Activated T-helper 1 cell treated with anti-CD3 and anti-CD28 coated beads, Interleukin-12 subunit alpha, Interleukin-12 subunit beta, Interleukin-2, Interleukin-4 antibody, amounts not matched to agents 30 ng/mL and 10 ng/mL and 1 ng/mL, durations not matched to agents 14 hours and 24 hours and 36 hours (primary cell): ENCODE measurements at regions of chr12 and their contacts with region 1.

Region 1: GRCh38 chr12:22544038-22544979 is at the start of gene C2CD5:
- DNase-seq: peak; percentile 92
- H3K4me3 Mint-ChIP-seq: peak within 1 kb of the TSS; percentile 94
- H3K27ac Mint-ChIP-seq: peak within 1 kb of the TSS; percentile 96
- H3K4me1 Mint-ChIP-seq: peaks cover 35% of the 10 kb centered on the region
- H3K27me3 Mint-ChIP-seq: peaks cover 14% of the 10 kb centered on the region
- total RNA-seq, gene C2CD5: 30.0 and 35.5 TPM in 2 replicates

Region 2: GRCh38 chr12:21476949-21477348 is 1067.4 kb before region 1 on chr12:
- intact Hi-C with region 1: loop called (anchors 10 kb)
- DNase-seq: no peak
- H3K4me3 Mint-ChIP-seq: no peak overlapping the region
- H3K27ac Mint-ChIP-seq: peak overlapping the region; percentile 83
- H3K4me1 Mint-ChIP-seq: peaks cover 22% of the 10 kb centered on the region
- H3K27me3 Mint-ChIP-seq: no peaks in the 10 kb centered on the region

Region 3: GRCh38 chr12:22046090-22046967 is 498.0 kb before region 1 on chr12 and contains the start of gene CMAS:
- intact Hi-C with region 1: loop called (anchors 2 kb)
- DNase-seq: peak; percentile 70
- H3K4me3 Mint-ChIP-seq: peak within 1 kb of the TSS; percentile 95
- H3K27ac Mint-ChIP-seq: peak within 1 kb of the TSS; percentile 88
- H3K4me1 Mint-ChIP-seq: peaks cover 48% of the 10 kb centered on the region
- H3K27me3 Mint-ChIP-seq: no peaks in the 10 kb centered on the region
- total RNA-seq, gene CMAS: 34.1 and 34.9 TPM in 2 replicates

Region 4: GRCh38 chr12:22529281-22530060 is 14.8 kb before region 1 on chr12:
- intact Hi-C with region 1: loop called (anchors 1 kb)
- DNase-seq: no peak
- H3K4me3 Mint-ChIP-seq: no peak overlapping the region
- H3K27ac Mint-ChIP-seq: no peak overlapping the region
- H3K4me1 Mint-ChIP-seq: peaks cover 14% of the 10 kb centered on the region
- H3K27me3 Mint-ChIP-seq: no peaks in the 10 kb centered on the region

Region 5: DNA sequence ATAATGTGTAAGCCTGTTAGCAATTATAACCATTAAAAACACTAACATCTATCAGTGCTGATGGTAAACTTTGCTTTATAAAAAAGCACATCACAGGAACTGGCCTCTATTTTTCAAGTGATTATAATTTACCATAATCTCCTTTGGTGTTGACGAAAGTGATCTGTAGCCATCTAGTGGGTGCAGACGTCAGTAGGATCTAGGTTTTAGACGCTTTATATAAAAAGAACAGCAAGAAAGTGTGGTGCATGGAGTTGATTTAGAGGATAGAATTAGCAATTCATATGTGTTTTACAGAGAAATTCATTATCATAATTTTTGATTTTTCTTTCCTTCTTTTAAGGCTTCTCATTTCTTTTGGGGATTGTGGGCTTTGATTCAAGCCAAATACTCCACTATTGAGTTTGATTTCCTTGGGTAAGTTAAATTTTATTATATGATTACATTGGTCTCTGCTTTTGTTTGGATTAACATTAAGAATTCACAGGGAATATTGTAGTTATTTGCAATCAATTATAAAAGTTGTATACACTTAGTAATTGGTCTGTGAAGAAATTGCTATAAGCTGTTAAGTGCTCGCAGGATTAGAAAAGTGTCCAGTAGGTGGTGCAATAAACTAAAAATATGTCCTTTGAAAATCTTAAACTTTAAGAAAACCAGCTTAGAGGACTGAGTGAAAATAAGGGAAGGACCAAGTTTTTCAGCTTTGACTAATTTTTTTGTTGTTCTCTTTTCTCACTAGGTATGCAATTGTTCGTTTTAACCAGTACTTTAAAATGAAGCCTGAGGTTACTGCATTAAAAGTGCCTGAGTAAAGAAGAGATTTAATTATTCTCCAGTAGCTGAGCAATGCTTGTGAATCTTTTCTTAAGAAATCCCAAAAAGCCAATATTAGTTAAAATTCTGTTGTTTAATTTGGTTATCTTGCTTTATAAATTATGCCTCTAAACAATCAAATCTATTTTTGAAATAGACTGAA is 140.1 kb after region 1 on chr12:
- intact Hi-C with region 1: loop called (anchors 1 kb)
- DNase-seq: no peak
- H3K4me3 Mint-ChIP-seq: no peak overlapping the region
- H3K27ac Mint-ChIP-seq: no peak overlapping the region
- H3K4me1 Mint-ChIP-seq: peaks cover 24% of the 10 kb centered on the region
- H3K27me3 Mint-ChIP-seq: no peaks in the 10 kb centered on the region

Region 6: DNA sequence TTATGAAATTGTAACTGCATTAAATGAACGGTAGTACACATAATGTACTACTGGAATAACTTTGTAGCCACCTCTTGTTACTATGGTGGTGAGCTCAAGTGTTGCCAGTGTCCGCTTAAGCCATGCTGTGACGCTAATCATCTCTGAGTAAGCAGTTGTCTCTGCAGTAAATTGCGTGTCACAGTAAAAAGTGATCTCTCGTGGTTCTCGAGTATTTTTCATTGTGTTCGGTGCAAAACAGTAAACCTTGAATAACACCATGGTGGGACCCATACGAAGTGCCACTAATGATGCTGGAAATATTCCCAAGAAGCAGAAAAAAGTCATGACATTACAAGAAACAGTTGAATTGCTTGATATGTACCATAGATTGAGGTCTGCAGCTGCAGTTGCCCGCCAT is 880.4 kb after region 1 on chr12:
- intact Hi-C with region 1: no loop called
- DNase-seq: no peak
- H3K4me3 Mint-ChIP-seq: no peak overlapping the region
- H3K27ac Mint-ChIP-seq: no peak overlapping the region
- H3K4me1 Mint-ChIP-seq: no peaks in the 10 kb centered on the region
- H3K27me3 Mint-ChIP-seq: no peaks in the 10 kb centered on the region